PC-9 (cell line): ENCODE measurements at regions of chr3 and their contacts with region 1.

Region 1: GRCh38 chr3:185423178-185423577 is 60.2 kb downstream of the MAP3K13 start:
- DNase-seq: peak in 1 of 2 experiments; percentile 29
- H3K4me3 ChIP-seq: no peak overlapping the region
- H3K27ac ChIP-seq: no peak overlapping the region
- H3K4me1 ChIP-seq: peaks cover 7% of the 10 kb centered on the region; the same call in 1 of the 2 replicates
- H3K27me3 ChIP-seq: no peaks in the 10 kb centered on the region
- CTCF ChIP-seq: no peak

Region 2: DNA sequence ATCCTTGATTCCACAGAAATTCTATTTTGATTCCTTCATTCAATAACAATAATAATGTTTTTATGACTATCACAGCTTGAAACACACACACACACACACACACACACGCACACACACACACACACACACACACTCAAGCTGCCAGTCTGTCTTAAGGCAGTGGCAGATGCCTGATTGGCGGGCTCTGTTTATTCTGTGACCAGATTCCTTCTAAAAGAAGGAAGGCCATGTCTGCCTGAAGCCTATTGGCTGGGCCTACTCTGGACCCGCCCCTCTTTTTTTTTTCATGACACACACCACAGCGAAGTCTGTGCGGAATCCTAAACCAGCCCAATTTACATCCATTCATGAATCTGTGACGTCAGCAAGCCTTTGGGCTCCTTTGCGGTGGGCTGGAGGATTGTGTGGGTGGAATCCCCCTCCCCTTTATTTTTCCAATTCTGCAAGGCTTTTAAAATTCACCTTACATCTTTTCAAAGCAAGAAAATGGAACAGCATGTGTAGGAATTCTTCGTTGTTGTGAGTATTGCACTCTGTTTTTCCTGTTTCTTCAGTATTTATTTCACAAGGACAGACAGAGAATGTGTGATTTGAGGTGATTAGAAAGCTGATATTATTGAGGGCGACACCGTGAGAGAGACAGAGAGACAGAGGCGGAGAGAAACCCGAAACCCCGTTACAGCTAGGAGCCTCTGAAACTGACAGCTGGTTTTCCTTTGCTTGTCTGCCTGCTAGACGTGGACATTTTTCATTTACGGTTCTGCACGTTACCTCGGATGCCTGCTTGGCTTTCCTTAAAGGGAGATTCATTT is 60.1 kb before region 1 on chr3 and contains the start of gene MAP3K13:
- CTCF ChIA-PET with region 1: no interaction called
- POLR2A ChIA-PET with region 1: interaction called, 11 read pairs
- intact Hi-C with region 1: no loop called
- DNase-seq: peak; percentile 83 to 99
- H3K4me3 ChIP-seq: peak within 1 kb of the TSS; percentile 66
- H3K27ac ChIP-seq: peak within 1 kb of the TSS; percentile 55
- H3K4me1 ChIP-seq: peaks cover 24% of the 10 kb centered on the region
- H3K27me3 ChIP-seq: no peaks in the 10 kb centered on the region
- CTCF ChIP-seq: no peak
- total RNA-seq, gene MAP3K13: 42.2 and 65.5 TPM in 2 replicates